Activated CD8-positive, alpha-beta T cell treated with anti-CD3 and anti-CD28 coated beads, Interleukin-2, amount 10 ng/mL, durations not matched to agents 7 days and 5 days (primary cell): ENCODE measurements at regions of chr1 and their contacts with region 1.

Region 1: DNA sequence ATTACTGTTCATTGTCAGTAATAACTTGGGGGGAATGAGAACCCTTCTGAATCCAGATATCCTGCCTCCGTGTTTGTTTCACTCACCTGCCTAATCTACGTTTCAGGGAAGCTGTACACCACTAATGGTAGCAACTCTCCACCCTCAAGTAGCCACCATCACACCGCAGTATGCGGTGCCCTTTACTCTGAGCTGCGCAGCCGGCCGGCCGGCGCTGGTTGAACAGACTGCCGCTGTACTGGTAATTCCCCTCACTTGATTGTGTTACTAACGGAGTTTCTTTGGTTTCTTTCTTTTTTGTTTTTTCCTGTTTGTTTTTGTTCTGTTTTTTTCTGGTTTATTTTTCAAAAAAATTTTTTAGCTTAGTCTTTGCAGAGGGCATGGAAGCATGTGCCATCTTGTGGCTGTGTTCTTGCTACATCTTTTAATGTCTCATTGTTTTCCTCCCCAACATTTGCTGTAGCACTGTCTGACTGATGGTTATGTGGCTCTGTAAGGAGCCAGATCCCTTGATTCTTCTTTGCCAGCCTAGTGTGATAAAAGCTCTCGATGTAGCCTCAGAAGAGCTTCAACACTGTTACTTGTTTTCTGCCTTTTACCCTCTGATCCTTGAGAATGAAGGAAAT is 15.9 kb upstream of the OLFML3 start:
- DNase-seq: no peak
- ATAC-seq: no peak
- H3K4me3 Mint-ChIP-seq: no peak overlapping the region
- H3K27ac Mint-ChIP-seq: no peak overlapping the region
- H3K4me1 Mint-ChIP-seq: peaks cover 6% of the 10 kb centered on the region
- H3K27me3 Mint-ChIP-seq: no peaks in the 10 kb centered on the region

Region 2: GRCh38 chr1:113207019-113207418 is 756.4 kb before region 1 on chr1:
- CTCF ChIA-PET with region 1: no interaction called
- POLR2A ChIA-PET with region 1: no interaction called
- DNase-seq: no peak
- ATAC-seq: no peak
- H3K4me3 Mint-ChIP-seq: no peak overlapping the region
- H3K27ac Mint-ChIP-seq: no peak overlapping the region
- H3K4me1 Mint-ChIP-seq: no peaks in the 10 kb centered on the region
- H3K27me3 Mint-ChIP-seq: peaks cover 19% of the 10 kb centered on the region

Region 3: GRCh38 chr1:113714606-113715275 is 248.7 kb before region 1 on chr1:
- CTCF ChIA-PET with region 1: no interaction called
- POLR2A ChIA-PET with region 1: no interaction called
- DNase-seq: no peak
- ATAC-seq: no peak
- H3K4me3 Mint-ChIP-seq: no peak overlapping the region
- H3K27ac Mint-ChIP-seq: no peak overlapping the region
- H3K4me1 Mint-ChIP-seq: peaks cover 3% of the 10 kb centered on the region
- H3K27me3 Mint-ChIP-seq: no peaks in the 10 kb centered on the region

Region 4: GRCh38 chr1:113949007-113949406 is 14.4 kb before region 1 on chr1:
- CTCF ChIA-PET with region 1: interaction called, 23 read pairs
- POLR2A ChIA-PET with region 1: interaction called, 4 read pairs
- DNase-seq: no peak
- ATAC-seq: no peak
- H3K4me3 Mint-ChIP-seq: no peak overlapping the region
- H3K27ac Mint-ChIP-seq: peak overlapping the region; percentile 36
- H3K4me1 Mint-ChIP-seq: peaks cover 59% of the 10 kb centered on the region
- H3K27me3 Mint-ChIP-seq: no peaks in the 10 kb centered on the region

Region 5: GRCh38 chr1:114145504-114146151 is 182.2 kb after region 1 on chr1:
- CTCF ChIA-PET with region 1: no interaction called
- POLR2A ChIA-PET with region 1: no interaction called
- DNase-seq: no peak
- ATAC-seq: no peak
- H3K4me3 Mint-ChIP-seq: no peak overlapping the region
- H3K27ac Mint-ChIP-seq: no peak overlapping the region
- H3K4me1 Mint-ChIP-seq: no peaks in the 10 kb centered on the region
- H3K27me3 Mint-ChIP-seq: peaks cover 28% of the 10 kb centered on the region